ENCODE measurements at regions of chr19 and their contacts with region 1.

Region 1: GRCh38 chr19:8262431-8262830 is 45.7 kb downstream of the CD320 start:
- DNase-seq: no peak
- H3K27ac ChIP-seq: no peak overlapping the region
- CTCF ChIP-seq: no peak

Region 2: GRCh38 chr19:6925801-6926751 is 1336.4 kb before region 1 on chr19:
- CTCF ChIA-PET with region 1: interaction called, 13 read pairs
- POLR2A ChIA-PET with region 1: no interaction called
- DNase-seq: no peak
- H3K27ac ChIP-seq: no peak overlapping the region
- CTCF ChIP-seq: no peak

Region 3: GRCh38 chr19:8221161-8221560 is 41.3 kb before region 1 on chr19:
- CTCF ChIA-PET with region 1: no interaction called
- POLR2A ChIA-PET with region 1: no interaction called
- DNase-seq: no peak
- H3K27ac ChIP-seq: peak overlapping the region; percentile 64
- CTCF ChIP-seq: no peak

Measured in RWPE1 (cell line).